PC-9 (cell line): ENCODE measurements at regions of chr7 and their contacts with region 1.

Region 1: GRCh38 chr7:5354460-5355232 is 69.0 kb downstream of the TNRC18 start:
- DNase-seq: no peak
- H3K4me3 ChIP-seq: no peak overlapping the region
- H3K27ac ChIP-seq: no peak overlapping the region
- H3K4me1 ChIP-seq: no peaks in the 10 kb centered on the region
- H3K27me3 ChIP-seq: no peaks in the 10 kb centered on the region
- CTCF ChIP-seq: no peak

Region 2: DNA sequence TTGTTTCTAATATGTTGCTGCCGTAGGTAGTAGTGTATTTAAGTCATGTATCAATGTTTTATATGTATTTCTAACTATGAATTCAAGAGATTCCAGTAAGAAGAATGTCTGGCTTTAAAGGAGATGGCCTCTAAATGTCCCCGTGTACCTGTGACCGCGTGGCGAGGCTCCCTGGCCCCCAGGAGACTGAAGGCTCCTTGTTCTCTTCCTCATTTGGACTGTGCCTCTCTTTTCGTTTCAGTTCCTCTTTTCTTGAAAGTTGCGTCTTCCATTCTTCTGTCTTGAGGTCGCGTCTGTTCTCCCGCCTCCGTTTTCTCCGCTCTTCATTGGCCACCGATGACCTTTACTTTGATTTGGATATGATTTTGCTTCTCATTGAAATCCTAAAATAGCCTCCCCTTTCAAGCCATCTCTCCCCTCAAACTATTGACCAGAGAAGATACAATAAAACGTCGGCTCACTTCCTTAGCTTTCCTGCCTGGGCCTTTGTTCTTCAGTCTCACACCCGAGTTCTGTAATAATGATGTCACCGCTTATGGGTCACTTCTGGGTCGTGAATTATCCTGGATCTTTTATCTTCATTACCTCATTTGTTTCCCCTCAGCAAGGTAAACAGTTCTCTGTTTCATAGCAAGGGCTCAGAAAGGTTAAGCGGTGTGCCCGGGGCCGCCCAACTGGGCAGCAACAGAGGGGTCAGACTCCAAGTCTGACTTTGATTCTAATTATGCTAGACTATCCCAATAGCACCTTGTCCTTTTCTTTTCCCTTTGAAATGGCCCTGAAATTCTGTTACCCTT is 135.9 kb before region 1 on chr7:
- CTCF ChIA-PET with region 1: no interaction called
- POLR2A ChIA-PET with region 1: no interaction called
- intact Hi-C with region 1: no loop called
- DNase-seq: no peak
- H3K4me3 ChIP-seq: no peak overlapping the region
- H3K27ac ChIP-seq: no peak overlapping the region
- H3K4me1 ChIP-seq: no peaks in the 10 kb centered on the region
- H3K27me3 ChIP-seq: no peaks in the 10 kb centered on the region
- CTCF ChIP-seq: no peak

Region 3: DNA sequence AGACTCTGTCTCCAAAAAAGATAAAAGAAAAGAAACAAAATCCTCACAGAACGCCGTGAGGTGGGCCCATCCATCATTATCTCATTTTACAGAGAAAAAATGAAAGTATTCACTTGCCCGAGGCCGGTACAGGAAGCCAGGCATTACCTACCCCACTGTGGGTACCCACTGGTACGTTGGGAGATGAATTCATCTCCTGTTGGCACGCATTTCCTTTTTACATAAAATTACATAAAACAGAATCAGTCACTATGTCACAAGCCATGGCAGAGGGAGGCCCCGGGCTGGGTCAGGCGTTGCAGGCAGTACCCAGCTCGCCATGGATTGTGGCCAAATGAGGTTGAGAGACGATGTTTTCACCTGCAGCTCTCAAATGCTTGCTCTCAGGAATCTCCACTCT is 107.6 kb after region 1 on chr7:
- CTCF ChIA-PET with region 1: interaction called, 20 read pairs
- POLR2A ChIA-PET with region 1: no interaction called
- intact Hi-C with region 1: no loop called
- DNase-seq: no peak
- H3K4me3 ChIP-seq: no peak overlapping the region
- H3K27ac ChIP-seq: no peak overlapping the region
- H3K4me1 ChIP-seq: no peaks in the 10 kb centered on the region
- H3K27me3 ChIP-seq: no peaks in the 10 kb centered on the region
- CTCF ChIP-seq: no peak